ENCODE measurements at regions of chr5 and their contacts with region 1.

Region 1: GRCh38 chr5:91384671-91385430 is 1.7 kb upstream of the ARRDC3 start:
- DNase-seq: peak; percentile 86
- H3K4me3 ChIP-seq: peak overlapping the region; percentile 97
- H3K27ac ChIP-seq: peak overlapping the region; percentile 100
- H3K4me1 ChIP-seq: peaks cover 10% of the 10 kb centered on the region
- H3K27me3 ChIP-seq: no peaks in the 10 kb centered on the region

Region 2: DNA sequence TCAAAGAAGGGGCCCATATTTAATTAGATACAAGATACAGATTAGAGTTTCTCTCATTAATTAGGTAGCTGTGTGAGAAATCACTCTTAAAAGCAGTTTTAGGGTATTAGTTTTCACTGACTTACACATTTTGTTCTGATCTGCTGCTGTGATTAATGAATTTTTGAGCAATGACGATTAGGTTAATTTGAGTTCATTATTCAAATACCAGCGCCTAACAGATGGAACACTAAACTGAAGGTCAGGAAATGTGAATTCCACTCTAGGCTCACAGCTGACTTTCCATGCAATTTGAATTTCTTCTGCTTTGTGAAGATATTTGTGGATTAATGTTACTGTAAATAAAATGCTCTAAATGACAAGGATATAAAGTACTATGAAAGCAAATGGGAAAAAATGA is 445.6 kb before region 1 on chr5:
- in situ Hi-C with region 1: loop called (anchors 5 kb)
- DNase-seq: peak; percentile 29
- H3K4me3 ChIP-seq: no peak overlapping the region
- H3K27ac ChIP-seq: no peak overlapping the region
- H3K4me1 ChIP-seq: peaks cover 10% of the 10 kb centered on the region
- H3K27me3 ChIP-seq: no peaks in the 10 kb centered on the region

Region 3: DNA sequence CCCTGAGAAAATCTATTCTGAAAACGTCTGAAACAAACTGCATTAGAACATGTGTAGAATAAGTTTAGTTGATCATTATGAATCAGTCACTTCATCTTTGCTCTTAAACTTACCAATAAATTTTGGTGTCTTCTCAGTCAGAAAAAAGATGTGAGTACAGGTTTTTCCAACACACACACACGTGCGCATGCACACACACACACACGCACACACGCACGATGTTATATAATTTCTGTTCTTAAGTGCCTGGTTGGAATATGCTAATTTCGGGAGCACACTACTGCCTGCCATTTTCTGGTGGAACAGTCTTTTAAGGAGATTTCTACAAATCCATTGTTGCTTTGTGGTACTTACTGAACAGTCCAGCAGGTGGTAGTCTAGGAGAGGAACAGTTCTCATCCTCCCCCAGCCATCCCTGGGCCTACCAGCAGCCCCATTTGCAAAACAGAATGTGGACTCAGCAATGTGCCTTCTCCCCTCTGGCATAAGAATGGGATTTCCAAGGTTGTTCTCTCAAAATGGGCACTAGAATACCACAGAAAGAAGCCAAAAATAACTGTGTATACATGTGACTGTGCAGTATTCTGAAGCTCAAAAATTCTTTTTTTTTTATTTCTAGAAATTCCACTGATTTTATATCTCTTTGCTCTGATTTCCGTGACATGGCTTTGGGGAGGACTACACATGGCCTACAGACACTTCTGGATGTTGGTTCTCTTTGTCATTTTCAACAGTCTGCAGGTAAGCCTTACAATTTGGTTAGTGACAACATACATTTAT is 283.1 kb before region 1 on chr5:
- in situ Hi-C with region 1: loop called (anchors 5 kb)
- DNase-seq: peak; percentile 88
- H3K4me3 ChIP-seq: no peak overlapping the region
- H3K27ac ChIP-seq: no peak overlapping the region
- H3K4me1 ChIP-seq: peaks cover 14% of the 10 kb centered on the region; the same call in 1 of the 2 replicates
- H3K27me3 ChIP-seq: no peaks in the 10 kb centered on the region

Region 4: DNA sequence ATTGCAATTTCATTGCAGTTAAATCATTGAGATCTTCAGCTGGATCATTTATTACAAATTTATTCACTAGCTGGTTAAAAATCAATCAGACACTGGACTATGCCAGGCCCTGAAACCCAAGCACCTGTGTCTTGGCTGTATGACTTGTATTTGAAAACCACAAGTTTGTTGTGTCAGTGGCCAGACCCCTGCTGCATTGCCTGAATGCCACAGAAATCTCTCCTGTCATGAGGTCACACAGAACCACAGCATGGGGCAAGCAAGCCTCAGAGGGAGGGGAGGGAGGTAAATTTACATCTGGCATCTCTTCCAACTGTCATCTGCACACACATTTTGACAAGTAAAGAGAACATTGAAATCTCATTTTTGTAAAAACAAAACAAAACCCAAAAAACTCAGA is 91.7 kb before region 1 on chr5:
- in situ Hi-C with region 1: no loop called
- DNase-seq: no peak
- H3K4me3 ChIP-seq: no peak overlapping the region
- H3K27ac ChIP-seq: no peak overlapping the region
- H3K4me1 ChIP-seq: peaks cover 27% of the 10 kb centered on the region
- H3K27me3 ChIP-seq: no peaks in the 10 kb centered on the region

Region 5: DNA sequence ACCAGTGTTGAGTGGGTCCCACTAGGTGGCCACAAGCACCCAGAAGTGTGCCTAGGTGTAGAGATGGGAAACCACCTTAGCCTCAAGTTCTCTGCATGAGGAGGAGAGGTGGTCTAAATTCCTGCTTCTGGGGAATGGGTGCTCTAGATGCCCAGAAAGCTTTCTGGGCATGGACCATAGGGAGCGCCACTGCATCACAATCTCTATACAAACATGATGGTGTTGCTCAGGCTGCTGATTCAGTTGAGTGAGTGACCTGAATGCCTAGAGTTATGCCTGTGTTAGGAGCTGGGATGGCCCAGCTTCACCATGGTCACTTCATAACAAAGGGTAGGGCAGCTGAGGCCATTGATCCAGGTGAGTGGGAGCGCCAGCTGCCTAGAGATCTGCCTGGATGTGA is 666.1 kb after region 1 on chr5:
- in situ Hi-C with region 1: no loop called
- DNase-seq: no peak
- H3K4me3 ChIP-seq: no peak overlapping the region
- H3K27ac ChIP-seq: no peak overlapping the region
- H3K4me1 ChIP-seq: no peaks in the 10 kb centered on the region
- H3K27me3 ChIP-seq: no peaks in the 10 kb centered on the region

Region 6: GRCh38 chr5:92927291-92927778 is 1542.5 kb after region 1 on chr5:
- in situ Hi-C with region 1: no loop called
- DNase-seq: no peak
- H3K4me3 ChIP-seq: no peak overlapping the region
- H3K27ac ChIP-seq: no peak overlapping the region
- H3K4me1 ChIP-seq: no peaks in the 10 kb centered on the region
- H3K27me3 ChIP-seq: no peaks in the 10 kb centered on the region